Endothelial cell of umbilical vein (primary cell): ENCODE measurements at regions of chr5 and their contacts with region 1.

Region 1: GRCh38 chr5:75336625-75337339 is at the start of gene HMGCR:
- DNase-seq: peak; percentile 99
- H3K4me3 ChIP-seq: peak within 1 kb of the TSS; percentile 69 to 97 (median 82)
- H3K27ac ChIP-seq: peak within 1 kb of the TSS; percentile 60
- H3K4me1 ChIP-seq: peaks cover 26% of the 10 kb centered on the region
- H3K27me3 ChIP-seq: no peaks in the 10 kb centered on the region
- CTCF ChIP-seq: peak in 1 of 2 donors; percentile 16
- POLR2A ChIP-seq: peak; percentile 77
- total RNA-seq, gene HMGCR: 104 and 128 TPM in 2 replicates

Region 2: GRCh38 chr5:74766849-74767578 is 569.8 kb before region 1 on chr5 and contains the starts of genes GFM2 and NSA2:
- CTCF ChIA-PET with region 1: no interaction called
- POLR2A ChIA-PET with region 1: no interaction called
- dilution Hi-C with region 1: no loop called
- intact Hi-C with region 1: loop called (anchors 2 kb)
- DNase-seq: peak; percentile 97
- H3K4me3 ChIP-seq: peak within 1 kb of the TSS; percentile 73 to 98 (median 86)
- H3K27ac ChIP-seq: peak within 1 kb of the TSS; percentile 16
- H3K4me1 ChIP-seq: peaks cover 17% of the 10 kb centered on the region
- H3K27me3 ChIP-seq: no peaks in the 10 kb centered on the region
- CTCF ChIP-seq: no peak
- POLR2A ChIP-seq: peak; percentile 63
- total RNA-seq, gene GFM2: 23.3 and 29.0 TPM in 2 replicates
- total RNA-seq, gene NSA2: 72.4 and 73.8 TPM in 2 replicates

Region 3: DNA sequence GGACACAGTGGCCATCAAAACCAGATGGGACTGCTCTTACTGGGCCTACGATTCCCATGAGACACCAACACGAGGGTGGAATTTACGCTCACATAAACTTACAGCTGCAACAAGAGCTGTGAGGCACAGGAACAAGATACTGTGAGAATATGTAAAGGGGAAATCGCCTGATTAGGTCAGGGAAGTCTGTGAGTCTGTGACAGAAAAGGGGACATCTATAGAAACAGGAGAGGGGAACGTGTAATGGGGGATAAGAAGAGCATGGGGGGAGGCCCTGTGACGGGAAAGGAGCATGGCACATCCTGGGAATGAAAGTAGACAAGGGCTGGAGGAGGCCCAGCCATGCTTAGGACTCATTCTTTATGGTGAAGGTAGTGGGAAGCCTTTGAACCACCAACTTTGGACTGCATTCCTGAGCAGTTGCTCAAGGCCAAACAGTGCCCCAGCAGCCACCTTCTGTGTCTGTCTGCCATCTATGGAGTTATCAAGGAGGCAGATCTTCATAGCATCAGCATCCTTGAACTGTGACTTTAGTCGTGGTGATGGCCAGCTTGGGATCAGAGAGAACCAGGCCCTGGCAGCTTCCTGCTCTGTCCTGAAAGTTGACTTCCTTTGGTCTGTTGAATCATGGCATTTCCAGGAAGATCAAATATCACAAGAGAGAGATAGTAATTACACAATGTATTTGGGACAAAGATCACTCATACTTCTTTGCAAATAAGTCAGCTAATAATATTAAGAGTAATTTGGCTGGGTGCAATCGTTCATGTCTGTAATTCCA is 382.7 kb before region 1 on chr5:
- CTCF ChIA-PET with region 1: no interaction called
- POLR2A ChIA-PET with region 1: no interaction called
- dilution Hi-C with region 1: no loop called
- intact Hi-C with region 1: no loop called
- DNase-seq: no peak
- H3K4me3 ChIP-seq: no peak overlapping the region
- H3K27ac ChIP-seq: no peak overlapping the region
- H3K4me1 ChIP-seq: peaks cover 8% of the 10 kb centered on the region
- H3K27me3 ChIP-seq: peaks cover 0 to 2% of the 10 kb centered on the region in 2 experiments
- CTCF ChIP-seq: no peak
- POLR2A ChIP-seq: no peak

Region 4: DNA sequence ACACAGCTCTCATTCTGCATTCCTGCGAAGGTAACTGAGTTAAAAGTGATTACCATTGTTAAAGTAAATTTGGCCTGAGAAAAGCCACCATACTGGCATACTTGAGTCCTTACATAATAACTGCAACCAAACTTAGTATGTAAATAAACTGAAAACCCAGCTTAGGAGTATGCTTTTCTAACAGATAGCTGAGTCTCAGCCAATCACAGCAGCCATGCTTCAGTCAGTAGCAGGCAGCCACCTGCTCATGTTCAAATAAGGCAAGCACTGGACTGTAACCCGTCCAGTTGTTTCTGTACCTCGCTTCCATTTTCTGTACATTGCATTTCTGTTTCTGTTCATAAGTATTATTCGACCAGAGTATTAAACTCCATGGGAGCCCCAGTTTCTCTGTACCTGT is 343.0 kb before region 1 on chr5:
- CTCF ChIA-PET with region 1: no interaction called
- POLR2A ChIA-PET with region 1: no interaction called
- dilution Hi-C with region 1: no loop called
- intact Hi-C with region 1: no loop called
- DNase-seq: no peak
- H3K4me3 ChIP-seq: no peak overlapping the region
- H3K27ac ChIP-seq: no peak overlapping the region
- H3K4me1 ChIP-seq: no peaks in the 10 kb centered on the region
- H3K27me3 ChIP-seq: peaks cover 0 to 4% of the 10 kb centered on the region in 2 experiments
- CTCF ChIP-seq: no peak
- POLR2A ChIP-seq: no peak

Region 5: GRCh38 chr5:75236322-75237316 is 100.2 kb before region 1 on chr5 and contains the start of gene ANKRD31:
- CTCF ChIA-PET with region 1: interaction called, 15 read pairs
- POLR2A ChIA-PET with region 1: interaction called, 3 read pairs
- dilution Hi-C with region 1: no loop called
- intact Hi-C with region 1: loop called (anchors 1 kb)
- DNase-seq: peak; percentile 71
- H3K4me3 ChIP-seq: peak within 1 kb of the TSS; percentile 8 to 57 (median 53)
- H3K27ac ChIP-seq: no peak within 1 kb of the TSS
- H3K4me1 ChIP-seq: peaks cover 3% of the 10 kb centered on the region
- H3K27me3 ChIP-seq: no peaks in the 10 kb centered on the region
- CTCF ChIP-seq: peak; percentile 67 to 86
- POLR2A ChIP-seq: peak; percentile 38
- total RNA-seq, gene ANKRD31: not detected in 2 replicates

Region 6: DNA sequence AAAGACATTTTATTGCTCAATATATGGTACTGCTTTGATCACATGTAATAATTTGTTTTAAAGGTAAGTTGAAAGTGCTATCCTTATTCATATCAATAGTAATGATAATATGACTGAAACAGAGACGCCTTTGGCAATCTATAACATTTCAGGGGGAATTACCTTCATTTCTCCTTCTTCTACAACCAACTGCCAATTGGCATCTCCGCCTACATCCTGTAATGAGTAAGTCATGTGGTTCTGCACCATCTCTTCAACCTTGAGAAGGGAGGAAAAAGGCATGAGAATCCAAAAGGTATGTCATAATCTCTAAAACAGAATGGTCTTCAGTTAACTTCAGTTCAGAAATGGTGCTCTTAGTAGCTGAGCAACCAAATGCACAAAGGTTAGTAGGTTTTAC is 52.6 kb after region 1 on chr5:
- CTCF ChIA-PET with region 1: no interaction called
- POLR2A ChIA-PET with region 1: no interaction called
- dilution Hi-C with region 1: no loop called
- intact Hi-C with region 1: no loop called
- DNase-seq: no peak
- H3K4me3 ChIP-seq: no peak overlapping the region
- H3K27ac ChIP-seq: no peak overlapping the region
- H3K4me1 ChIP-seq: no peaks in the 10 kb centered on the region
- H3K27me3 ChIP-seq: no peaks in the 10 kb centered on the region
- CTCF ChIP-seq: no peak
- POLR2A ChIP-seq: no peak

Region 7: GRCh38 chr5:75511435-75512384 is 174.9 kb after region 1 on chr5 and contains the starts of genes CERT1 and POLK:
- CTCF ChIA-PET with region 1: interaction called, 4 read pairs
- POLR2A ChIA-PET with region 1: interaction called, 5 read pairs
- dilution Hi-C with region 1: no loop called
- intact Hi-C with region 1: loop called (anchors 1 kb)
- DNase-seq: peak; percentile 99
- H3K4me3 ChIP-seq: peak within 1 kb of the TSS; percentile 83 to 96 (median 91)
- H3K27ac ChIP-seq: peak within 1 kb of the TSS; percentile 66
- H3K4me1 ChIP-seq: peaks cover 22% of the 10 kb centered on the region
- H3K27me3 ChIP-seq: no peaks in the 10 kb centered on the region
- CTCF ChIP-seq: no peak
- POLR2A ChIP-seq: peak; percentile 78
- total RNA-seq, gene CERT1: 21.3 and 25.6 TPM in 2 replicates
- total RNA-seq, gene POLK: 22.1 and 27.3 TPM in 2 replicates

Region 8: GRCh38 chr5:75717082-75717922 is 380.5 kb after region 1 on chr5 and contains the start of gene POC5:
- CTCF ChIA-PET with region 1: interaction called, 5 read pairs
- POLR2A ChIA-PET with region 1: interaction called, 3 read pairs
- dilution Hi-C with region 1: no loop called
- intact Hi-C with region 1: loop called (anchors 1 kb)
- DNase-seq: peak; percentile 98
- H3K4me3 ChIP-seq: peak within 1 kb of the TSS; percentile 49 to 88 (median 86)
- H3K27ac ChIP-seq: peak within 1 kb of the TSS; percentile 53
- H3K4me1 ChIP-seq: peaks cover 7% of the 10 kb centered on the region
- H3K27me3 ChIP-seq: peaks cover 8 to 9% of the 10 kb centered on the region in 2 experiments
- CTCF ChIP-seq: no peak
- POLR2A ChIP-seq: no peak
- total RNA-seq, gene POC5: 7.8 and 8.3 TPM in 2 replicates